Mammary epithelial cell (primary cell): ENCODE measurements at regions of chr9 and their contacts with region 1.

Region 1: GRCh38 chr9:109440797-109441287 is 57.3 kb downstream of the PTPN3 start:
- DNase-seq: peak; percentile 77
- H3K4me3 ChIP-seq: no peak overlapping the region
- H3K27ac ChIP-seq: peak overlapping the region; percentile 51
- H3K4me1 ChIP-seq: peaks cover 22% of the 10 kb centered on the region
- H3K27me3 ChIP-seq: no peaks in the 10 kb centered on the region
- CTCF ChIP-seq: peak; percentile 91 to 92

Region 2: DNA sequence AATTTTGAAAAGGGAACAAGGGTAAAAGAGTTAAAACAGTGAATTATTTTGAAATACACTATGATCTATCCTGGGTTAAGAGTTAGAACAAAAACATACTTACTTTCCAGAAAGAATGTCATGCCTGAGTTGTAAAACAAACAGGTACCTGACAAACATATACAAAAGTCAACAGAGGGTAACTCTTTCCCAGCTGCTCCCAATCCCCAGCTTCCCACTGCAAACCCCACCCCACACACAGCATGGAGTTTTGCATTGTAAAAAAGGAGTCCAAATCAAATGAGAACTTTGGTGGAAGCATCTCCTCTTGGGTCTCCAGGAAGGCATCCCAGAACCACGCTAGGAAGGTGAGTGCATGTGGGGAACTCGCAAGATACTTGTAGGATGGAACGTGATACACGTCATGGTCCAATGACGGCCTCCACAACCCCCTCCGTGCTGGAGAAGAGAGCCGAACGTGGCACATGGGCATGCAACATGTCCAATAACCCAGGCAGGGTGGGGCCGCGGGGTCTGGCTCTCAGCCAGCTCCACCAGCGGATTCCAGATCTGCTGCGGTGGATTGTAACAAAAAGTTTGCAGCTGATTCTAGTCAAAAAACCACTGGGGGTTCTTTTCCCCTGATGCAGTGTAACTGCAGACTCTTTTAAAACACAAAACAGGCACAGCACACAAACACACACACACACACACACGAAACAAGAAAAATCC is 175.8 kb before region 1 on chr9:
- CTCF ChIA-PET with region 1: no interaction called
- dilution Hi-C with region 1: no loop called
- in situ Hi-C with region 1: no loop called
- intact Hi-C with region 1: no loop called
- DNase-seq: no peak
- H3K4me3 ChIP-seq: no peak overlapping the region
- H3K27ac ChIP-seq: no peak overlapping the region
- H3K4me1 ChIP-seq: peaks cover 7% of the 10 kb centered on the region
- H3K27me3 ChIP-seq: no peaks in the 10 kb centered on the region
- CTCF ChIP-seq: no peak

Region 3: DNA sequence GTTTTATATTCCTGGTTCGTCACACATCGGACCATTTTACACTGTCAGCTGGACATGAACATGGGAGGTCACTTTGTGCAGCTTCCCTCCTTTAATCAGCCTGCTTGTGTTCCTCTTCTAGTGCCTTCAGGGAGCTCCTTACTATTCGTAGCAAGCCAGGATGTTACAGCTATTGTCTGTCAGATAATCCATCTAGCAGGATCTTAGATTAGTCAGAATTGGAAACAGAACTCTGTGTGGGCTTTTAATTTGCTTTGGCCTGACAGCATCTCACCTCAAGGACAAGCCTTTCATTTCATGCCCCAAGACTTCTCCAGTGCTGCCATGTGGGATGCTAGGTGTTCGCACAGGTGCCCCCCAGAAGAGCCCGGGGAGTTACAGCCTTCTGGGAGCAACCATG is 89.8 kb before region 1 on chr9:
- CTCF ChIA-PET with region 1: no interaction called
- dilution Hi-C with region 1: no loop called
- in situ Hi-C with region 1: no loop called
- intact Hi-C with region 1: no loop called
- DNase-seq: no peak
- H3K4me3 ChIP-seq: no peak overlapping the region
- H3K27ac ChIP-seq: no peak overlapping the region
- H3K4me1 ChIP-seq: peaks cover 13% of the 10 kb centered on the region
- H3K27me3 ChIP-seq: peaks cover 11% of the 10 kb centered on the region
- CTCF ChIP-seq: no peak

Region 4: DNA sequence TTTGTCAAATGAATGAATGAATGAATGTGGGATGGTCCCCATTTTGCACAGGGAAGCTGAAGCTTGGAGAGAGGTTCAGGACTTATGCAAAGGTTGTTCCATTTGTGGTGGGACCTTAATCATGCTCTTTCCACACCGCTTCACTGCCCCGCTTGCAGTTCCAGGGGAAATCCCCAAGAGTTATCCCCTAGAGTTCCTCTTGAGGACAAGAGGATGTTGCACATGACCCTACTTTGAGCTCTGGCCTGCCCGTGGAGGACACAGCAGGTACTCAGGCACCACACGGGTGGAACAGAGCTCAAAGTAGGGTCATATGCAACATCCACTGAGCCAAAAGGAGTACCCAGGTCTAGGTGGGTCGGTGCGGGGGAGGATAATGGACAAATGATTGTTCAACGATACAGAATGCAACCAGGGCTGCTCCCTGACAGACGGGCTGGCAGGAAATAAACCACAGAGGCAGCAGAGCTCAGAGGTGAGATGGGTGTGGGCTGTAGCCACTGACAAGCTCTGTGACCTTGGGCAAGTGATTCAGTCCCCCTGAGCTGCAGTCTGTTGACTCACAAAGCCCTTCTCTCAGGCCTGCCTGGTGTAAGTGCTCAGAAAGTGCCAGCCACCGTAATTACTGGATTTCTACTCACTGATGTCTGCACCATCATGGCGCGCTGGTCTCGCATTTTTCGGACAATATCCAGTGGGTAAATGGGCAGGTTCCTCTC is 59.7 kb before region 1 on chr9:
- CTCF ChIA-PET with region 1: no interaction called
- dilution Hi-C with region 1: loop called (anchors 5 kb)
- in situ Hi-C with region 1: no loop called
- intact Hi-C with region 1: no loop called
- DNase-seq: peak; percentile 43
- H3K4me3 ChIP-seq: no peak overlapping the region
- H3K27ac ChIP-seq: no peak overlapping the region
- H3K4me1 ChIP-seq: no peaks in the 10 kb centered on the region
- H3K27me3 ChIP-seq: no peaks in the 10 kb centered on the region
- CTCF ChIP-seq: no peak

Region 5: GRCh38 chr9:109520478-109521132 is 79.8 kb after region 1 on chr9:
- CTCF ChIA-PET with region 1: interaction called, 13 read pairs
- dilution Hi-C with region 1: no loop called
- in situ Hi-C with region 1: loop called in 1 of 2 experiments (anchors 10 kb)
- intact Hi-C with region 1: loop called (anchors 1 kb)
- DNase-seq: peak; percentile 81
- H3K4me3 ChIP-seq: no peak overlapping the region
- H3K27ac ChIP-seq: peak overlapping the region; percentile 9
- H3K4me1 ChIP-seq: peaks cover 11% of the 10 kb centered on the region
- H3K27me3 ChIP-seq: no peaks in the 10 kb centered on the region
- CTCF ChIP-seq: peak; percentile 93 to 98

Region 6: DNA sequence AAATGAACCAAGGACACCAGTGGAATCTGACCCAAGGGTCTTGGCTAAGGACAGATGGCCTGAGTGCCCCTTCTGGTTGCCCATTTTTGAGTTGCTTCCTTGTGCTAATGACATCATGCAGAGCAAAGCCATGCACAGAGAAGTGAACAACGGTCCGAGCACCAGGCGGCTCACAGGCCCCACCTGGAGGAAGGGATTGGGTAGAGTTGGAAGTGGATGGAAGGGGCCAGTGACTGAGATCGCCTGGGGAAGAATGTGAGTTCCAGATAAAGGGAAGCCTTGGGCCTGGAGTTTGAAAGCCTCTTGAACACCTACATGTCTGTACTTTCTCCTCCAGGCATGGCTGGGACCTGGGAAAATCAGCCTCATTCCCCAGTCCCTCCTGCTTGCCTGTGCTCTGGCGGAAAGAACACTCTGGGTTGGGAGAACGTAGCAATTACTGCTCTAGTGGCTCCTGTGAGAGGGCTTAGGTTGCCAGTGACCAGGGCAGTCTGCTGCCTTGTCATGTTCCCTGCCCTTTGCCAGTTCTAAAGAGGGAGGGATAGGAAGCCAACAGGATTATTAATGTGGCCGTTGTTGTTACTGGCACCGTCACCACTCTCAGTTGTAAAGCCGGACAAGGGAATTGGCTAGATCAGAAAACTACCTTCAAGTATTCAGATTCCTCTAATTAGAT is 119.8 kb after region 1 on chr9:
- CTCF ChIA-PET with region 1: no interaction called
- dilution Hi-C with region 1: no loop called
- in situ Hi-C with region 1: no loop called
- intact Hi-C with region 1: loop called (anchors 1 kb)
- DNase-seq: no peak
- H3K4me3 ChIP-seq: no peak overlapping the region
- H3K27ac ChIP-seq: no peak overlapping the region
- H3K4me1 ChIP-seq: peaks cover 24% of the 10 kb centered on the region
- H3K27me3 ChIP-seq: no peaks in the 10 kb centered on the region
- CTCF ChIP-seq: peak; percentile 32 to 49

Region 7: DNA sequence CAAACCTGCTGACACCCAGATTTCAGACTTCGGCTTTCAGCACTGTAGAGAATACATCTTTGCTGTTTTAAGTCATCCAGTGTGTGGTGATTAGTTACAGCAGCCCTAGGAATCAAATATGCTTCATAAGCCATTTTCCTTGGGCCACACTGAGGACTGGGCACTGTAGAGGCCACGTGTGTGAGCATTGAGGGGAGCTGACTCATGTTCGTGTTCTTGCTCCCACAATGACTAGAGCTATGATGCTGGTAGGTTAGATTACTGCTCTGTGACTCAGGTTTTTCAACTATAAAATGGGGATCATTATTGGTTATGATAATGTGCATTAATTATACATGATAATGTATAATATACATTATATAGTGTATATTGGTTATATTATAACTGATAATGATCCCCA is 242.7 kb after region 1 on chr9:
- CTCF ChIA-PET with region 1: no interaction called
- dilution Hi-C with region 1: no loop called
- in situ Hi-C with region 1: no loop called
- intact Hi-C with region 1: no loop called
- DNase-seq: peak; percentile 53
- H3K4me3 ChIP-seq: no peak overlapping the region
- H3K27ac ChIP-seq: no peak overlapping the region
- H3K4me1 ChIP-seq: no peaks in the 10 kb centered on the region
- H3K27me3 ChIP-seq: no peaks in the 10 kb centered on the region
- CTCF ChIP-seq: no peak